Mammary epithelial cell (primary cell): ENCODE measurements at regions of chr17 and their contacts with region 1.

Region 1: GRCh38 chr17:63478791-63479494 is 2.1 kb downstream of the ACE start:
- DNase-seq: peak; percentile 81
- H3K4me3 ChIP-seq: no peak overlapping the region
- H3K27ac ChIP-seq: no peak overlapping the region
- H3K4me1 ChIP-seq: peaks cover 17% of the 10 kb centered on the region
- H3K27me3 ChIP-seq: peaks cover 5% of the 10 kb centered on the region
- CTCF ChIP-seq: peak; percentile 90 to 98

Region 2: DNA sequence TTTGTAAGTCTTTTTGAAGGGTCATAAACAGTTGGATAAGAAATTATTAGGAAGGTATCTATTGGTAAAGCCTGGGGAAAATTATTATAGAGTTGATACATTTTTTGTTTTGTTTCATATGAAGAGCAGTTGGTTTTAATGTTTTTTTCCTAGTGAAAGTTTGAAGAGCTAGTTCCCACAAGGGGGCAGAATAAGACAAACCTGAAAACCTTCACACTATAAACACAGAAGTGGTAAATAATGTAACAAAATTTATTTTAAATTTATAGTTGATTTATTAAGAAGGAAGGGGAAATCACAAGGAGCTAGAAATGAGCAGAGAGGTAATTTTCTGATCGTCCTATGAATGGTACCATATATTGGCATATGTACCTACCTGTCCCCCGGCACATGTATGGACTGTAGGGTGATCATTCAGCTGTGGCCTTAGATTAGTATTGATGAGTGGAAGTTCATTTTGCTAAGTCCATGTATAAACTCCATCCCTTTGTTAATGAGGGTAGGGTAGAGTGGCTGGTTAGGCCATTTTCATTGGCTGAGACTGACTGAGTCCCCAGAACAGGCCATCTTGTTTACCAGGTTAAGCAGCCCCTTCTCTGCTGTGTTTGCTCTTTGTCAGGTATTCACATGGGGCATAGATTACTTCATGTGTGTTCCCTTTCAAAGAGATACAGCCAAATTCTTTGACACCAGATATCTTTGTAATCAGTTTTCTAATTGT is 396.5 kb before region 1 on chr17:
- CTCF ChIA-PET with region 1: no interaction called
- dilution Hi-C with region 1: no loop called
- in situ Hi-C with region 1: no loop called
- intact Hi-C with region 1: loop called (anchors 2 kb)
- DNase-seq: peak; percentile 5
- H3K4me3 ChIP-seq: no peak overlapping the region
- H3K27ac ChIP-seq: no peak overlapping the region
- H3K4me1 ChIP-seq: peaks cover 25% of the 10 kb centered on the region
- H3K27me3 ChIP-seq: no peaks in the 10 kb centered on the region
- CTCF ChIP-seq: peak; percentile 31 to 50

Region 3: DNA sequence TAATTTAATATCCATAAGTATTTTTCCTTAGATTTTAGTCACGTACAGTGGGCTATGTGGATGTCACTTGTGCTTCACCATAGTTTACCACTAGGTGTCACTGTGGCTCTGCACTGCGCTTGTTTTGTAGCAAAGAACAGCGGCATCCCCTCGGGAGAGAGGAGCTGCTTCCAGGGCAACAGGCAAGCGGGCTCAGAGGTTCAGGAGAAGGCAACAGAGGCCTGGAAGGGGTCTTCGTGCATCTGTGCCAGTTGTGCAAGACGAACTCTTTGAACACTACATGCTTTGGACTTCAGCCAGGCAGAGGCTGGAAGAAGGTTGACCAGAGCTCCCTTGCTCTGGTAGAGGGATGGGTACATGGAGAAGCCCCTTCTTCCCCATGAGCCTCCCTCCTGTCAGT is 53.5 kb before region 1 on chr17:
- CTCF ChIA-PET with region 1: interaction called, 21 read pairs
- dilution Hi-C with region 1: no loop called
- in situ Hi-C with region 1: loop called in 1 of 2 experiments (anchors 5 kb)
- intact Hi-C with region 1: loop called (anchors 1 kb)
- DNase-seq: peak; percentile 58
- H3K4me3 ChIP-seq: no peak overlapping the region
- H3K27ac ChIP-seq: no peak overlapping the region
- H3K4me1 ChIP-seq: peaks cover 18% of the 10 kb centered on the region
- H3K27me3 ChIP-seq: no peaks in the 10 kb centered on the region
- CTCF ChIP-seq: peak; percentile 88 to 98

Region 4: DNA sequence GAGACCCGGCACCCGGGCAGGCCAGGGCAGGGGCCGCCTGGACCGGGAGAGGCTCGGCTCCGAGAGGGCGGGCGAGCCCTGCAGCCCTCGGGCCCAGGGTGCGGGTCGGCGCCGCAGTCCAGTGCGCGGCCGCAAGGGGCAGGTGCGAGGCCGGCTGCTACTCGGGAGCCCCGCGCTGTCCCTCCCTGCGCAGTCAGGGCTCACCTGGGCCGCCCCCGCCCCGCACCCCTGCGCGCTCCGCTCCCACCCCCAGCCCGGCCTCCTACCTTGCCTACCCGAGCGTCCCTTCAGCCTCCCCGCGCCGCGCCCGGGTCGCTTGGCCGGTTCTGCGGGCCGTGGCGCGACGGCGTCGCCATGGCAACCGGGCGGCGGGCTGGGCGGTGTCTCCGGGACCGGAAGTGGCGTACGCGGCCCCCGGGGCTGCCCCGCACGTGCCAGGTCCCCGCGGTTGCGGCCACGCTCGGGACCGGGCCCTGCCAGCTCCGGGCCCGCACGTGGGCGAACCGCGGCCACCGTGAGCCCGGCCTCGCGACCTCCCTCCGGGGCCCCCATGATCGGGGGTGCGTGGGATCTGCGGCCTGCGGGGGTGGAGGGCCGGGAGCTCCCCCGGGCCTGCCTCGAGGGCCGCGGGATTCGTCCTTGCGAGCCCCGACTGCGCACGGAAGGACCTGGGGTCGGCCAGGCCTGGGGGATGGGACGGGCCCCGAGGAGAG is 32.8 kb before region 1 on chr17 and contains the start of gene CYB561:
- CTCF ChIA-PET with region 1: interaction called, 6 read pairs
- dilution Hi-C with region 1: no loop called
- in situ Hi-C with region 1: no loop called
- intact Hi-C with region 1: loop called (anchors 1 kb)
- DNase-seq: peak; percentile 63
- H3K4me3 ChIP-seq: peak within 1 kb of the TSS; percentile 59 to 72 (median 71)
- H3K27ac ChIP-seq: peak within 1 kb of the TSS; percentile 79
- H3K4me1 ChIP-seq: peaks cover 17% of the 10 kb centered on the region
- H3K27me3 ChIP-seq: no peaks in the 10 kb centered on the region
- CTCF ChIP-seq: peak; percentile 29 to 54
- total RNA-seq, gene CYB561: 26.6 to 35.8 TPM

Region 5: GRCh38 chr17:63542942-63543821 is 64.2 kb after region 1 on chr17:
- CTCF ChIA-PET with region 1: no interaction called
- dilution Hi-C with region 1: loop called (anchors 5 kb)
- in situ Hi-C with region 1: no loop called
- intact Hi-C with region 1: no loop called
- DNase-seq: no peak
- H3K4me3 ChIP-seq: no peak overlapping the region
- H3K27ac ChIP-seq: no peak overlapping the region
- H3K4me1 ChIP-seq: peaks cover 18% of the 10 kb centered on the region
- H3K27me3 ChIP-seq: peaks cover 3% of the 10 kb centered on the region
- CTCF ChIP-seq: no peak